ENCODE measurements at regions of chr5 and their contacts with region 1.

Region 1: GRCh38 chr5:173781814-173782670 is 106.1 kb upstream of the CPEB4 start:
- DNase-seq: peak; percentile 32
- H3K4me3 ChIP-seq: peak overlapping the region in 1 of 4 donors; percentile 31
- H3K27ac ChIP-seq: peak overlapping the region; percentile 77 to 93 (median 90)
- H3K4me1 ChIP-seq: peaks cover 14 to 34% (median 20%) of the 10 kb centered on the region in 3 donors
- H3K27me3 ChIP-seq: no peaks in the 10 kb centered on the region
- CTCF ChIP-seq: no peak
- POLR2A ChIP-seq: no peak

Region 2: GRCh38 chr5:173887610-173888472 is 105.8 kb after region 1 on chr5 and contains the start of gene CPEB4:
- intact Hi-C with region 1: loop called (anchors 10 kb)
- DNase-seq: peak; percentile 94
- H3K4me3 ChIP-seq: peak within 1 kb of the TSS; percentile 69 to 97 (median 83)
- H3K27ac ChIP-seq: peak within 1 kb of the TSS; percentile 91 to 95 (median 92)
- H3K4me1 ChIP-seq: peaks cover 25 to 80% (median 39%) of the 10 kb centered on the region in 3 donors
- H3K27me3 ChIP-seq: no peaks in the 10 kb centered on the region
- CTCF ChIP-seq: peak in 2 of 6 experiments; percentile 10 to 15
- POLR2A ChIP-seq: peak in 3 of 4 donors; percentile 96 to 98 (median 97)
- total RNA-seq, gene CPEB4: 33.2 to 51.6 (median 44.8) TPM

Measured in esophagus squamous epithelium (tissue), 5 donors.